MCF 10A (cell line): ENCODE measurements at regions of chr6 and their contacts with region 1.

Region 1: DNA sequence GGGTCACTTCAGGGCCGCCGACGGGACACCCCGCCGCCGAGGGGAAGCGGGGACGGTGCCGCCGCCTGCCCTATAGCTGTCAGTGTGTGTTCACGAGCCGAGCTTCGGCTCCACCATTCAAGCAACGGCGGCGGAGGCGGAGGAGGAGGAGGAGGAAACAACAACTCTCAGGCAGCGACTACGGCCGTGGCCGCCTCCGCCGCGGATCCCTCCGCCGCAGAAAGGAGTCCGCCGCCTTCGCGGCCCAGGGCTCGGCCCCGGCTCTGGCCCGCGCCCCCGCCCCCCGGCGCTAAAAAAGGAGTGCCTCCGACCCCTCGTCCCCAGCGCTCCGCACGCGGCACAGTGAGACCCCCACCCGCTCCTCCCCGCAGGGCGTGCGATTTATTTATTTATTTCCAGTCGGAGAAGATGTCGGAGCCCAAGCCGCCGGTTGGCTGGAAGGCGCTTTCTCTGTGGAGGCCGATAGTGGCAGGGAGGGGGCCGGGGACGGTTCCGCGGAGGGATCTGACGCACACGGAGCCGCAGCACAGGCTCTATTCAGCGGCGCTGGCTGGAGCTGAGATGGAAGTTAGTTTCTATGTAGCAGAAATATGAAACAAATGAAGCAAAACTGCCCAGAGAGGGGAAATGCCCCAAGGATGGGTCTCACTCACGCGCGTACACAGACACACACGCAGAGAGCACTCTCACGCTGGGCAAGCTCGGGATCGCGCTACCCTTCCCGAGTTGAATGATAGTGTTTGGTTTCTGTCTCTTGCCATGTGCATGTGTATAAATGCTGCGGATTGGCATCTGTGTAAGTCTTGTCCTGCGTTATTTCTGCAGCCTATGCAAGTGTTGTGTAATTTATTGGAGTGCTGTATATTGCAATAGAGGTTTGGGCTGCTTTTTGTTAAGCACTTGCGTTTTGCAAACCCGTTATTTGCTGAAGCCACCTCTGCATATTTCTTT is at the start of gene PHIP:
- DNase-seq: peak; percentile 95
- H3K4me3 Mint-ChIP-seq: peak within 1 kb of the TSS; percentile 79
- H3K27ac Mint-ChIP-seq: peak within 1 kb of the TSS; percentile 98
- H3K4me1 Mint-ChIP-seq: peaks cover 5% of the 10 kb centered on the region
- H3K27me3 Mint-ChIP-seq: no peaks in the 10 kb centered on the region
- CTCF ChIP-seq: no peak
- total RNA-seq, gene PHIP: 25.3 and 26.5 TPM in 2 replicates

Region 2: GRCh38 chr6:78850621-78851020 is 227.7 kb before region 1 on chr6:
- CTCF ChIA-PET with region 1: no interaction called
- POLR2A ChIA-PET with region 1: no interaction called
- intact Hi-C with region 1: no loop called
- DNase-seq: no peak
- H3K4me3 Mint-ChIP-seq: no peak overlapping the region
- H3K27ac Mint-ChIP-seq: no peak overlapping the region
- H3K4me1 Mint-ChIP-seq: peaks cover 10% of the 10 kb centered on the region
- H3K27me3 Mint-ChIP-seq: no peaks in the 10 kb centered on the region
- CTCF ChIP-seq: no peak

Region 3: GRCh38 chr6:79225716-79226599 is 147.6 kb after region 1 on chr6:
- CTCF ChIA-PET with region 1: no interaction called
- POLR2A ChIA-PET with region 1: interaction called, 15 read pairs
- intact Hi-C with region 1: no loop called
- DNase-seq: no peak
- H3K4me3 Mint-ChIP-seq: no peak overlapping the region
- H3K27ac Mint-ChIP-seq: no peak overlapping the region
- H3K4me1 Mint-ChIP-seq: peaks cover 10% of the 10 kb centered on the region
- H3K27me3 Mint-ChIP-seq: no peaks in the 10 kb centered on the region
- CTCF ChIP-seq: no peak

Region 4: DNA sequence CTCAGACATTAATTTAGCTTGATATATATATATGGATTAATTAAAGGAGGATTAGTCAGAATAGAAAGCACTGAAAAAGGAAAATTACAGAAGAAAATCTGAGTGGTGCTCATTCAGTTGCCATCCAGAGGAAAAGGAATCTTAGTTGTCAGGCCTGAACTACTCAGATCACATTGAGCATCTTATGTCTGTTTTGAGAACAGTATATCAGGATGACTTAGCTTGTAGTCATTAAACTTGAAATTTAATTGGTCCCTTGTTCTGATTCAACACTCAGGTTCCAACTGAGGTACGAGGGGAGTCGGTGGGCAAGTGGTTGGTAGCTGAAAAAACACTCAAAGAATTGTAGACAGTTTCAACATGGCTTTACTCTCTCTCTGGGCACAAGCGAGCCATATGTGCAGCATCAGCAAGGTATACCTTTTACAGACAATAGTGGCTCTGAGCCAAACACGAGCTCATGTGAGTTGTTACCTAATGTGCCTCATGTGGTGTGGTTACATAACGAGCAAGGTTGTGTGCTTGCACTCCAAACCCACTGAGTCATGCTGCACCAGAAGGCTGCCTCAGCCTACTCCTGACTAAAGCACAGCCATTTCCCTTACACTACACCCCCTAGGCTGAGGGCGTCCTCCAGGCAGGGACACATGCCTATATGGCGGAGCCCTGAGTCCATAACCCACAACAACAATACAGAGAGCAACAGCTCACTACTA is 229.1 kb after region 1 on chr6:
- CTCF ChIA-PET with region 1: no interaction called
- POLR2A ChIA-PET with region 1: interaction called, 25 read pairs
- intact Hi-C with region 1: no loop called
- DNase-seq: peak; percentile 97
- H3K4me3 Mint-ChIP-seq: no peak overlapping the region
- H3K27ac Mint-ChIP-seq: peak overlapping the region; percentile 81
- H3K4me1 Mint-ChIP-seq: peaks cover 12% of the 10 kb centered on the region
- H3K27me3 Mint-ChIP-seq: no peaks in the 10 kb centered on the region
- CTCF ChIP-seq: no peak

Region 5: DNA sequence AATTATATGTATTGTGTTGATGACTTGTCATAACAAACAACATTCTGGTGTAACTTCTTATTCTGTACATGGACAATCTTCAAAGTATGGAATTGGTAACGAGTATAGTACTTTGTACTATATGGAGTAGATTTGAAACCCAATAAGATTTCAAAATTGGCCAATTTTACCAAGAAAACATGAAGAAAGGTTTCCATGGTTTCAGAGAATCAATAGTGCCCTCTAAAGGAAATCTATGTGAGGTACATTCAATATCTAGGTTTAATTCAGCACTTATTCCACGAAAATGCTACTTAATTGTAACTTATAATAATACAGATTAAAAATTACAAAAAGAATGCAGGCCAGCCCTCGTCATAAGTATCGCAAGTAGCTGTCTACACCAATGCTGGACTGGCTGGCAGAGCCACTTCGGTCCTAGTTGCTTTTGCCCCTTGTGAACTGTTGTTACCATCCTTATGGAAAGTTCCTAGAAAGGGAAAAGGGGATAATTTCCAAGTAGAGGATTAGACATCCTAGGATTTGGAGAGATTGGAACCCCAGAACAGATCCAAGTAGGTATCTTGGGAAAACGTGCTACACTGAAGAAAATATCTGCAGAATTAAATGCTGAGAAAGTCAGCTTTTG is 388.0 kb after region 1 on chr6:
- CTCF ChIA-PET with region 1: interaction called, 6 read pairs
- POLR2A ChIA-PET with region 1: interaction called, 57 read pairs
- intact Hi-C with region 1: loop called (anchors 2 kb)
- DNase-seq: peak; percentile 48
- H3K4me3 Mint-ChIP-seq: no peak overlapping the region
- H3K27ac Mint-ChIP-seq: no peak overlapping the region
- H3K4me1 Mint-ChIP-seq: peaks cover 19% of the 10 kb centered on the region
- H3K27me3 Mint-ChIP-seq: no peaks in the 10 kb centered on the region
- CTCF ChIP-seq: peak; percentile 56

Region 6: GRCh38 chr6:79672631-79673111 is 594.3 kb after region 1 on chr6:
- CTCF ChIA-PET with region 1: no interaction called
- POLR2A ChIA-PET with region 1: interaction called, 6 read pairs
- intact Hi-C with region 1: loop called (anchors 2 kb)
- DNase-seq: peak; percentile 45
- H3K4me3 Mint-ChIP-seq: no peak overlapping the region
- H3K27ac Mint-ChIP-seq: peak overlapping the region; percentile 90
- H3K4me1 Mint-ChIP-seq: peaks cover 17% of the 10 kb centered on the region
- H3K27me3 Mint-ChIP-seq: no peaks in the 10 kb centered on the region
- CTCF ChIP-seq: peak; percentile 65